ENCODE measurements at regions of chr1 and their contacts with region 1.

Region 1: GRCh38 chr1:24526940-24527542 is 24.4 kb downstream of the RCAN3 start:
- DNase-seq: peak; percentile 74
- H3K4me3 Mint-ChIP-seq: no peak overlapping the region
- H3K27ac Mint-ChIP-seq: peak overlapping the region; percentile 63
- H3K4me1 Mint-ChIP-seq: peaks cover 70% of the 10 kb centered on the region
- H3K27me3 Mint-ChIP-seq: no peaks in the 10 kb centered on the region

Region 2: GRCh38 chr1:24516506-24516905 is 10.5 kb before region 1 on chr1:
- CTCF ChIA-PET with region 1: interaction called, 10 read pairs
- intact Hi-C with region 1: no loop called
- DNase-seq: no peak
- H3K4me3 Mint-ChIP-seq: no peak overlapping the region
- H3K27ac Mint-ChIP-seq: peak overlapping the region; percentile 47
- H3K4me1 Mint-ChIP-seq: peaks cover 66% of the 10 kb centered on the region
- H3K27me3 Mint-ChIP-seq: no peaks in the 10 kb centered on the region